ENCODE measurements at regions of chr17 and their contacts with region 1.

Region 1: DNA sequence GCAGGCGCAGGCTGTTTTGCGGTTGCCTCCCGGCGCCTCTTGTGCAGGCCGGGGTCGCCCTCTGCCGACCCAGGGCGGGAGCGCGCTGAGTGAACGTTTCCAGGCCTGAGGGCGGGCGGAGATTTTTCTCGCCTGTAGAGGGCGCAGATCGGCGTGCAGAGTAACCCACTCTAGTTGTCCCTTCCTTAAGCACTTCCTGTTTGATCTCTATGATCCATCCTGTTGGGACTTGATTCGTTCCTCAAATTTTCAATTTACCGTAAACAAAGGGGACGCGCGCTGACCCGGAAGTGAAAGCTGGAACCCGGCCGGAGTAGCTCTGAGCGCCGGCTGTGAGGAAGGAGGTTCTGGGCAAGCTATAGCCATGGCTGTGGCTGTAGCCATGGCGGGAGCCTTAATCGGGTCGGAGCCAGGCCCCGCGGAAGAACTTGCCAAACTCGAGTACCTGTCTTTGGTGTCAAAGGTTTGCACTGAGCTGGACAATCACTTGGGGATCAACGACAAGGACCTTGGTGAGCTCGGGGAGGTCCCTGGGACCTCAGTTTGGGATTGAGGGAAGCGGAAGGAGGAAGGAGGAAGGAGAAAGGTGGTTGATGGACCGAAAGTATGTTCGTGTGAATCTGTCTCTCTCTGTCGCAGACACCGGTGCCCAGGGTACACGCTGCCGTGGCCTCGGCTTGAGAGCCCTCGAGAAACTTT is at the start of gene DHX8:
- DNase-seq: peak; percentile 99 to 100
- ATAC-seq: peak; percentile 97 to 99
- H3K4me3 ChIP-seq: peak within 1 kb of the TSS; percentile 62
- H3K27ac ChIP-seq: peak within 1 kb of the TSS; percentile 81 to 90
- H3K4me1 ChIP-seq: peaks cover 30% of the 10 kb centered on the region
- CTCF ChIP-seq: peak; percentile 100
- EP300 ChIP-seq: no peak
- POLR2A ChIP-seq: peak; percentile 88
- RAD21 ChIP-seq: peak; percentile 100
- polyA plus RNA-seq, gene DHX8: 66.0 and 70.4 TPM in 2 replicates

Region 2: DNA sequence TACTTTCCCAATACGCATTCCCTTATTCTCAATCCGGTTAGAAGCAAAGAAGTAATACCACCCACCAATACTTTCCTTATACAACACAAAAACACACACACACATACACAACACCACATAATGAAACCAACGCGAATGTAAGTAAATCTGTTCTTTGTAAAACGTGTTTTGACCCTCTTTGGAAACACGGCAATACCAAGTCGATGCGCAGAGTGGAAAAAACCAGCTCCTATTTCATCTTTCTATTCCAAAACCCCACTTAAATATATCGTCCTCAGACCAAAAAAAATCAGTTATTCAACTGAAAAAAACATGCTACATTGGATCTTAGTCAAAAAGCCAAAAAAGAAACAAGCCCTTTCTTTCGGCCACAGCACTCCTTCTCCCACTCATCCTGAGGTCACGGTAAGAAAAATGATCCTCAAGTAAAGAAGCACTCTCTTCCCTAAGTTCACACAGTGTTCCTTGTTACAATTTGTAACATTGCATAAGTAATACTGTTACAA is 116.0 kb before region 1 on chr17:
- CTCF ChIA-PET with region 1: interaction called, 74 read pairs
- POLR2A ChIA-PET with region 1: interaction called, 61 read pairs
- DNase-seq: peak; percentile 90 to 92
- ATAC-seq: peak; percentile 70 to 74
- H3K4me3 ChIP-seq: peak overlapping the region; percentile 44; the same call in 2 of the 3 replicates
- H3K27ac ChIP-seq: peak overlapping the region; percentile 94
- H3K4me1 ChIP-seq: peaks cover 22% of the 10 kb centered on the region
- CTCF ChIP-seq: no peak
- EP300 ChIP-seq: no peak
- POLR2A ChIP-seq: peak; percentile 97
- RAD21 ChIP-seq: no peak; a peak in 1 of 5 replicates

Region 3: DNA sequence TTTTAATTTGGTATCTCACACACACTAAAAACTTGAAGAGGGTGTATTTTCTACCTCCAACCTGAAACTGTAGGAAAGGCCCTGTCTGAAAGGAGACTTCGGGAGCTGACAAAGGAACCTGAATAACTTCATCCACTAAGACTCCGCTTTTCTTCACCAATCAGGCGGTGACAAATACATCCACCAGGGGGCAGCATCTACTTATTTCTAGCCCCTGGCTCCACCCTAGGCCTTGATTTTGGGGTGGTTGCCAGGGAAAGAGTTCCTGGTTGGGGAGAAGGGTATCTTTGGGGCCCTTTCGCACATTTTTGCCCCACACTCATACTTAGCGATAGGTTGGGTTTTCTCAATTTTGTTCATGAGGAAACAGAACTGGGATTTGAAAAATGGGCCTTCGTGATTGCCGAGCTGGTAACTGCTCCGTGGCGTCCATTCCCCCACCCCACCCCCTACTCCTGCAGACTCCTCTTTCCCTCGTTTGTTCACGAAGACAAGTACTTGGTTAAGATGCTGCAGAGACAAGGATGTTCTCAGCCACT is 89.8 kb before region 1 on chr17:
- CTCF ChIA-PET with region 1: interaction called, 2,036 read pairs
- POLR2A ChIA-PET with region 1: interaction called, 92 read pairs
- DNase-seq: peak; percentile 91
- ATAC-seq: peak; percentile 51 to 72
- H3K4me3 ChIP-seq: no peak overlapping the region
- H3K27ac ChIP-seq: peak overlapping the region; percentile 53 to 69
- H3K4me1 ChIP-seq: peaks cover 13% of the 10 kb centered on the region
- CTCF ChIP-seq: peak; percentile 99
- EP300 ChIP-seq: no peak
- POLR2A ChIP-seq: no peak
- RAD21 ChIP-seq: peak; percentile 100

Region 4: DNA sequence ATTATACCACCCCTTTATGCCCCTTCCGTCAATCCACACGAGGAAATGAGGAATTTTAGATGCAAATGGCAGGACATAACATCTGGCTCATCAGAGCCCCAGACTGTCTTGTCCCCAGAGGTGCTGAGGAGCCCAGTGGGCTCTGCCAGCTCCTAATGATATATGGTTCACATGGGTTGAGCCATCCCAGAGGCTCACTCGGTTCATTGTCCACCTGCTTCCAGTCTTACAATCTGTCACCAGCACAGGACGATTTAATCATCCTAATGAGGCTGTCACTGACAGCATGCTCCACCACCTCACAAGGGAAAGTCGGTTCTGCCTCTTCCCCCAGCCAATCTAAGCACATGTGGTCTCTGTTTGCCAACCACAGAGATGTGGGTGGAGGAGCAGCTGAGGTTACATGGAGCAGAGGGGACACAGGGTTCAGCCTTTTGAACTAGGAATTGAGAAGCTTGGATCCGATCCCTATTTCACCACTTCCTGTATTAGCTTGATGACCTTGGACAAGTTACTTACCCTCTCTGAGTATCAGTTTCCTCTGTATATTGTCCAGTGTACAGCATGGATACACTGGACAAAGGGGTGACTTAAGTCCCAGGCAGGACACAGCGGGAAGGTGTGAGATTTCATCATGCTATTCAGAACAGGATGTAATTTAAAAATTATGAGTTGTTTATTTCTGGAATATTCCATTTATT is 27.0 kb before region 1 on chr17:
- CTCF ChIA-PET with region 1: interaction called, 61 read pairs
- POLR2A ChIA-PET with region 1: interaction called, 3 read pairs
- DNase-seq: no peak
- ATAC-seq: no peak; a peak in 2 of 6 replicates
- H3K4me3 ChIP-seq: no peak overlapping the region
- H3K27ac ChIP-seq: peak overlapping the region; percentile 64; a peak in 5 of 6 replicates
- H3K4me1 ChIP-seq: peaks cover 36% of the 10 kb centered on the region
- CTCF ChIP-seq: no peak
- EP300 ChIP-seq: no peak
- POLR2A ChIP-seq: no peak
- RAD21 ChIP-seq: no peak

Region 5: GRCh38 chr17:43530278-43531081 is 46.7 kb after region 1 on chr17:
- CTCF ChIA-PET with region 1: interaction called, 44 read pairs
- POLR2A ChIA-PET with region 1: interaction called, 3 read pairs
- DNase-seq: no peak
- ATAC-seq: peak in 1 of 2 experiments; percentile 7; a peak in 2 of 6 replicates
- H3K4me3 ChIP-seq: no peak overlapping the region
- H3K27ac ChIP-seq: peak overlapping the region in 1 of 2 experiments; percentile 48; a peak in 2 of 6 replicates
- H3K4me1 ChIP-seq: peaks cover 31% of the 10 kb centered on the region
- CTCF ChIP-seq: no peak
- EP300 ChIP-seq: no peak
- POLR2A ChIP-seq: no peak
- RAD21 ChIP-seq: no peak